GM12878 (cell line): ENCODE measurements at regions of chr5 and their contacts with region 1.

Region 1: DNA sequence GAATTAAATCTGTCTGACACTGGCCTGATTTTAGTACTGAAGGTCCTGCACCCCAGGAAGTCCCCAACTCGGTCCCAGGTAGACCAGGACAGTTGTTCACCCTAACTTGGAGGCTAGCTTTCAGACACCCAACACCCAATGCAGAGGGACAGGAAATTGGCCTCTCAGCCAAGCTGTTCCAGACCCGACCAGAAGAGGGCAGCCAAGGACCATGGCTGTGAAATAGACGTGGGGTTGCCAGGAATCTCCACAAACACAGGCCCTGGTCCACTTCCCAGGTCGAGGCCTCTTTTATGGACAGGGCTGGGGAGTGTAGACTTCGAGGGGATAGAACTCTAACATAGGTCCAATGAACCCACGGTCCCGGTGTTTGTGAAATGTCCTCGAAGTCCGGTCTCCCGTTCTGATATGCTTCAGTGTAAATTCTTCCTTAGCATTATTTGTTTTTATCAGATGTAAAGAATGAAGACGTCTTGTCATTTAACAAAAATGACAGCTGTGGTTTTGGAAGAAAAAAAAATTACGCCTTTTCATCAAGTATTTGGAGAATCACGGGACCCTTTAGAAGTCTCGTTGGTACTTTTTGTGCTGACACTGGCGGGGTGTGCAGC is 260.3 kb upstream of the ADAMTS16 start:
- DNase-seq: no peak
- ATAC-seq: peak; percentile 90
- H3K4me3 ChIP-seq: no peak overlapping the region
- H3K27ac ChIP-seq: no peak overlapping the region
- H3K4me1 ChIP-seq: no peaks in the 10 kb centered on the region
- H3K27me3 ChIP-seq: no peaks in the 10 kb centered on the region
- CTCF ChIP-seq: peak; percentile 87 to 96 (median 92)
- EP300 ChIP-seq: no peak
- POLR2A ChIP-seq: no peak
- RAD21 ChIP-seq: peak; percentile 99

Region 2: GRCh38 chr5:4772586-4772985 is 107.2 kb before region 1 on chr5:
- CTCF ChIA-PET with region 1: no interaction called
- POLR2A ChIA-PET with region 1: no interaction called
- RAD21 ChIA-PET with region 1: no interaction called
- SMC1A ChIA-PET with region 1: no interaction called
- in situ Hi-C with region 1: no loop called
- intact Hi-C with region 1: no loop called
- DNase-seq: no peak
- ATAC-seq: no peak
- H3K4me3 ChIP-seq: no peak overlapping the region
- H3K27ac ChIP-seq: no peak overlapping the region
- H3K4me1 ChIP-seq: no peaks in the 10 kb centered on the region
- H3K27me3 ChIP-seq: no peaks in the 10 kb centered on the region
- CTCF ChIP-seq: no peak
- EP300 ChIP-seq: no peak
- POLR2A ChIP-seq: no peak
- RAD21 ChIP-seq: no peak

Region 3: GRCh38 chr5:4929092-4929655 is 49.4 kb after region 1 on chr5:
- CTCF ChIA-PET with region 1: no interaction called
- POLR2A ChIA-PET with region 1: no interaction called
- RAD21 ChIA-PET with region 1: no interaction called
- SMC1A ChIA-PET with region 1: no interaction called
- in situ Hi-C with region 1: no loop called
- intact Hi-C with region 1: no loop called
- DNase-seq: no peak
- ATAC-seq: no peak
- H3K4me3 ChIP-seq: no peak overlapping the region
- H3K27ac ChIP-seq: no peak overlapping the region
- H3K4me1 ChIP-seq: no peaks in the 10 kb centered on the region
- H3K27me3 ChIP-seq: no peaks in the 10 kb centered on the region
- CTCF ChIP-seq: no peak
- EP300 ChIP-seq: no peak
- POLR2A ChIP-seq: no peak
- RAD21 ChIP-seq: no peak

Region 4: DNA sequence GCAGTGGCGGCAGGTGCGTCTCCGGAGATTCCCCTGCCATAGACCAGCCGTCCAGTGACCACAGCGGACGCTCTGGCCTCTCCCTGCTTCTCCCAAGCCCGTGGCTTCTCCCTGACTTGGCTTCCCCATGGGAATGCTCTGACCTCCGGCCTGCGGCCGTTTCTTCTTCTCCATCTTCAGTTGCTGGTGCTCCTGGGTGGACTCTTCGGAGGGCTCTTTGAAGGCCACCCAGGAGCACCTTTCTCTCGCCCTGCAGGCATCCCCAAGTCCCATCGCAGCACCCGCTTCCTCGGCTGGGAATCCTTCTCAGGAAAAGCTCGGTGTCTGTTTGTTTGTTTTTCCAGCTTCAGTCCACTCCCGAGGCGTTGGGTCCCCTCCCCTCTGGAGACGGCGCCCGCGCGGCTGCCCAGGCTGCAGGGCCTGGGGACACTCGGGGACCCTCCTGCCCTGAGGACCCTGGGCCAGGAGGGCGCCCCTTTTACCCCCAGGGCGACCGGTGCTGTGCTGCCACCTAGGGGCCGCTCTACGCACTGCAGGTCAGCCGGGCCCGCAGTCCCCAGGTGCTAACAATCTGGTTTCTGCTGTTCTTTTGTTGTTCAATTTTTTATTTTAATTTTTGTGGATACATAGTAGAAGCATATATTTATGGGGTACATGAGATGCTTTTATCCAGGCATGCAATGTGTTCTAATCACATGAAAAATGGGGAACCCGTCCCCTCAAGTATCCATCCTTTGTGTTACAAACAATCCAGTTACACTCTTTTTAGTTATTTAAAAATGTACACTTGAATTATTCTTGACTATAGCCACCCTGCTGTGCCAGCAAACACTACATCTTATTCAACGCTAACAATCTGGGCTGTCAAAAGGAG is 62.4 kb after region 1 on chr5:
- CTCF ChIA-PET with region 1: no interaction called
- POLR2A ChIA-PET with region 1: no interaction called
- RAD21 ChIA-PET with region 1: interaction called, 3 read pairs
- SMC1A ChIA-PET with region 1: interaction called, 5 read pairs
- in situ Hi-C with region 1: no loop called
- intact Hi-C with region 1: loop called (anchors 5 kb)
- DNase-seq: no peak
- ATAC-seq: peak; percentile 67; the same call in 2 of the 3 replicates
- H3K4me3 ChIP-seq: no peak overlapping the region
- H3K27ac ChIP-seq: no peak overlapping the region
- H3K4me1 ChIP-seq: no peaks in the 10 kb centered on the region
- H3K27me3 ChIP-seq: no peaks in the 10 kb centered on the region
- CTCF ChIP-seq: peak; percentile 52 to 87 (median 75)
- EP300 ChIP-seq: no peak
- POLR2A ChIP-seq: no peak
- RAD21 ChIP-seq: peak; percentile 67

Region 5: GRCh38 chr5:5063533-5063953 is 183.7 kb after region 1 on chr5:
- CTCF ChIA-PET with region 1: interaction called, 5 read pairs
- POLR2A ChIA-PET with region 1: no interaction called
- RAD21 ChIA-PET with region 1: interaction called, 8 read pairs
- SMC1A ChIA-PET with region 1: interaction called, 31 read pairs
- in situ Hi-C with region 1: no loop called
- intact Hi-C with region 1: no loop called
- DNase-seq: no peak
- ATAC-seq: peak; percentile 70
- H3K4me3 ChIP-seq: no peak overlapping the region
- H3K27ac ChIP-seq: no peak overlapping the region
- H3K4me1 ChIP-seq: no peaks in the 10 kb centered on the region; the same call in 1 of the 2 replicates
- H3K27me3 ChIP-seq: no peaks in the 10 kb centered on the region
- CTCF ChIP-seq: peak in 2 of 3 experiments; percentile 21 to 34; a peak in 3 of 6 replicates
- EP300 ChIP-seq: no peak
- POLR2A ChIP-seq: no peak
- RAD21 ChIP-seq: peak; percentile 83

Region 6: DNA sequence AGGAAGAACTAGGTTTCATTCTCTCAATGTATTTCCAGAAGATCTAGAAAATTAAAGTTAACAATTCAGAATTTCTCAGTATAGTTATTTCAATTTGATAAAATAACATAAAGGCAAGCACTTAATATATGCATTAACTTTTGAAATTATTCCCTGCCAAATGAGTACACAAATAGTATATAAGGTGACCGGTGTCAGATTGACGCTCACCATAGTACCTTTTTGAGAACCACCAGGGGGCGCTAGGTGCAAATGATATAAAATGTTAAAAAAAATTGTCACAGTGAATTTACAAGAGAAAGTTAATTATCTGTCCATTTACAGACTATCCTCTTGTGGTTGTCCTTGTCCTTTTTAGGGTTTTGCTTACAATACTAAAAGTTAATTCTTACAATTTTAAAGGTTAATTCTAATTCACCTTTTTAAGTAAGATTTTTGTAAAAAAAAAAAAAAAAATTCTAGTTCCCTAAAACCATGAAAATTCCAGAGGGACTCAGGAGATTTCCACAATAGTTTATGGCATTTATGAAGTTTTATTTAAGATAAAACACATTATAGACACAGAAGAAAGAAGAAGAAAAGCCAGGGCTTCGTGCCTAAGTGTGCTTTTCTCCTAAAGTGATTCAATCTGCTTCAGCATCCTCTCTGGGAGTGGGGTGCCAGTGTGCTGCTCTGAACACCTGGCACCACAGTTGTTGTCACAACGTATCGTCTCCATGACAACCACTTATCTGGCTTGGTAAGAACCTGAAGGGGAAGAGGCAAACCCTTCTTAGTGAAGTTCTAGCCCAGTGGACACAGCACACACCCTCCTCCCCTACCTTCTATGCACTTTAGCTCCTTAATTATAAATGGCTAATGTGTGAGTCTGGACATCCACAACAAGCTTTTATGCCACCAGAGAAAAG is 262.1 kb after region 1 on chr5:
- CTCF ChIA-PET with region 1: interaction called, 5 read pairs
- POLR2A ChIA-PET with region 1: interaction called, 3 read pairs
- RAD21 ChIA-PET with region 1: no interaction called
- SMC1A ChIA-PET with region 1: interaction called, 4 read pairs
- in situ Hi-C with region 1: no loop called
- intact Hi-C with region 1: loop called (anchors 2 kb)
- DNase-seq: no peak
- ATAC-seq: peak; percentile 71
- H3K4me3 ChIP-seq: no peak overlapping the region
- H3K27ac ChIP-seq: no peak overlapping the region
- H3K4me1 ChIP-seq: no peaks in the 10 kb centered on the region
- H3K27me3 ChIP-seq: peaks cover 2 to 4% of the 10 kb centered on the region in 2 experiments; a peak in 2 of 4 replicates
- CTCF ChIP-seq: peak; percentile 42 to 54 (median 53); a peak in 5 of 6 replicates
- EP300 ChIP-seq: no peak
- POLR2A ChIP-seq: no peak
- RAD21 ChIP-seq: peak; percentile 75

Region 7: DNA sequence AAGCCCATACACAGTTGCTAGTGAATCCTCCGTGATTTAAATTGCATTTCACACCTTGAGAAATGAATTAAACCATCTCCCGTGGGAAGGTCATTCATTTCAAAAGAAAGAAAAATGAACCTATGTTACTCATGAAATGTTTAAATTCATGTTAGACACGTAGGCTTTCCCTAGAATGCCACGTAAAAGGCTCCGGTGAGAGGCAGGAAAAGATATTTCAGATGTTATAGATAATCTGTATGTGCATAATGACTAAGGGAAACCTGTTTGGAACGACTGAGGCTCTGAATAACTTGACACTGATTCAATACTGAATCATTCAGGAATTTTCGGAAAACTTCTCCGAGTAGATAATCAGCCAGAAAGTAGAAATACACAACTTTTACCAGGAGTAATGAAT is 408.4 kb after region 1 on chr5:
- CTCF ChIA-PET with region 1: no interaction called
- POLR2A ChIA-PET with region 1: no interaction called
- RAD21 ChIA-PET with region 1: no interaction called
- SMC1A ChIA-PET with region 1: no interaction called
- in situ Hi-C with region 1: no loop called
- intact Hi-C with region 1: no loop called
- DNase-seq: no peak
- ATAC-seq: no peak
- H3K4me3 ChIP-seq: no peak overlapping the region
- H3K27ac ChIP-seq: no peak overlapping the region
- H3K4me1 ChIP-seq: no peaks in the 10 kb centered on the region
- H3K27me3 ChIP-seq: no peaks in the 10 kb centered on the region
- CTCF ChIP-seq: no peak
- EP300 ChIP-seq: no peak
- POLR2A ChIP-seq: no peak
- RAD21 ChIP-seq: no peak

Region 8: DNA sequence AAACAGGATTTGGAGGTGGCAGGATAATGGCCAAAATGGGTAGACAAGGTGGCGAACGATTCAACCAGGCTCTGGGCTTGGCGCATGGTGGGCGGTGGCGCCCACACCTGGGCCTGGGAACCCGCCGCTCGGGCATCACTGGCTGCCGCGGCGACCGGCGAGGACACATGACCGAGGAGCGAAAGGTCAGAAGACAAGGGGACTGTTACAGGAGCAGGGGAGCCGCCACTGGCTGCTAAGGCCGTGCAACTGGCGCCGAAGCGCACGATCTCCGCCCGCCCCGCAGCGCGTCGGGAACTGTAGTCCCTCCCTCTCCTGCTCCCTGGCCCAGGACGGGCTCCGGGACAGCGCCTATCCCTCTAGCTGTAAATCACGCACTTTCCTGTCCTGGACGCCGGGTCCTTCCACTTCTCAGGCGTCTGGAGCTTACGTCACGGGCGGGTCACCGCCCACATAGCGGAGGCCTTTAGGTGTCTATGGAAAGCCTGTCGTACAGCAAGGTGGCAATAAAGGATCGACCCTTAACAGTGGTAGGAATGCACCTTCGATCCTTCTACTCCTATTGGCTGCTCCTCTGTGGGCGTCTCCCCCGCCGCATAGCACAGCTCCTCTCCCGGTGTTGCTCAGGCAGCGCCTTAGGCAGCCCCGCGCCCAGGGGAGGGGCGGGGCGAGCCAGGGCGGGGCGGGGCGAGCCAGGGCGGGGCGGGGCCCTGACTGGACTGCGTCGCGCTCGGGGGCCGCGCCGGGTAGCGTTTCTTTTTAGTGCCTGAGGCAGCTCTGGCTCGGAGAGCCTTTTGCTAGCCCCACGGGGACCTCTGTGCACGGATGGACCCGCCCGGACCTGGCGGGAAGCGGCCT is 542.4 kb after region 1 on chr5 and contains the start of gene ICE1:
- CTCF ChIA-PET with region 1: interaction called, 31 read pairs
- POLR2A ChIA-PET with region 1: no interaction called
- RAD21 ChIA-PET with region 1: interaction called, 7 read pairs
- SMC1A ChIA-PET with region 1: interaction called, 15 read pairs
- in situ Hi-C with region 1: loop called (anchors 5 kb)
- intact Hi-C with region 1: loop called (anchors 1 kb)
- DNase-seq: peak; percentile 91
- ATAC-seq: peak; percentile 90
- H3K4me3 ChIP-seq: peak within 1 kb of the TSS; percentile 91
- H3K27ac ChIP-seq: peak within 1 kb of the TSS; percentile 94
- H3K4me1 ChIP-seq: peaks cover 27% of the 10 kb centered on the region
- H3K27me3 ChIP-seq: no peaks in the 10 kb centered on the region
- CTCF ChIP-seq: no peak
- EP300 ChIP-seq: no peak
- POLR2A ChIP-seq: peak; percentile 94
- RAD21 ChIP-seq: no peak
- polyA plus RNA-seq, gene ICE1: 3.8 to 5.5 TPM